Heart left ventricle (tissue), 16 donors: ENCODE measurements at regions of chr12 and their contacts with region 1.

Region 1: GRCh38 chr12:25404955-25405354 is 148.1 kb downstream of the LMNTD1 start:
- DNase-seq: no peak
- ATAC-seq: no peak
- H3K4me3 ChIP-seq: no peak overlapping the region
- H3K27ac ChIP-seq: no peak overlapping the region
- H3K4me1 ChIP-seq: no peaks in the 10 kb centered on the region
- H3K27me3 ChIP-seq: peaks cover 0 to 5% (median 0%) of the 10 kb centered on the region in 9 donors
- CTCF ChIP-seq: no peak
- POLR2A ChIP-seq: no peak

Region 2: GRCh38 chr12:25377469-25378177 is 27.3 kb before region 1 on chr12:
- intact Hi-C with region 1: loop called in 1 of 10 experiments (anchors 2 kb)
- DNase-seq: no peak
- ATAC-seq: no peak
- H3K4me3 ChIP-seq: no peak overlapping the region
- H3K27ac ChIP-seq: peak overlapping the region in 1 of 12 donors; percentile 13
- H3K4me1 ChIP-seq: peaks cover 0 to 20% (median 0%) of the 10 kb centered on the region in 12 donors
- H3K27me3 ChIP-seq: no peaks in the 10 kb centered on the region
- CTCF ChIP-seq: no peak
- POLR2A ChIP-seq: no peak

Region 3: DNA sequence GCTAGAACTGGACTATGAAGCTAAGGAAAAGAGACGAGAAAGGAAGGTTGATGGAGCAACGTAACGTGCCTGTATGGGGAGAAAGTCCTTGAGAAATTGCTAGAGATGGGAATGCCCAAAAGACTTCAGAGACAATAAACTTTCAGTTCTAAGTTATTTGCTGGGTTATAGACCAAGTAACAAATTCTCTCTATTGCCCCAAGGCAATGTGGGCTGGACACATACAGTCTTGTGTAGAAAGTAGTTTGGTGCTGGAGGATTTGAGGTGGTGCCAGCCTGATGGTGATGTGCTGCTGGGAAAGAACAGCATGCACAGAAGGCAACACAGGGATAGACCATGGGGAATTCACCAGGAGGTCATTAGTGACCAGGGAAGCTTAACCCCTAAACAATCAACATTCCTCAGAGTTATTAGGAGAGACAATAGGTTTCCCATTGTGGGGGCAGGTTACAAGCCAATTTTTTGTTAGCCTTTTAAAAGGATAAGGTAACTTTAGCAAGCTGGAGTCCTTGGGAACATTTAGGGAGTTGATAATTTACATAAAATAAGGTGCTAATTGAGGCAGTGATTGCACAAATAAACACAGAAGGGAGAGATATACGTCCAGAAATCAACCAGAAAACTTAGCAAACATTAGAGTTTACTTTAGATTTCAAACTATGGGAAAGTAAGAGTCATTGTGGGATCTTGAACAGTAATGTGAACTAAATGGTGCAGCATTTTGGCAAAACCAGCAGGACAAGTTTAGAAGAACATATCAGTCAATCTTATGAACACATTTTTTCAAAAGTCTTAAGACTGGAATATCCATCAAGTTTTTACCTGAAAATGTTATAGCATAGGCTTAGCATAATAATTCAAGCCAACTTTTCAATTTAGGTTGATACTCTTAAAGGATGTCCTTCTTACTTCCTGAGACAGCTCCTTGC is 86.7 kb after region 1 on chr12:
- intact Hi-C with region 1: no loop called
- DNase-seq: no peak
- ATAC-seq: no peak
- H3K4me3 ChIP-seq: no peak overlapping the region
- H3K27ac ChIP-seq: no peak overlapping the region
- H3K4me1 ChIP-seq: peaks cover 0 to 4% (median 0%) of the 10 kb centered on the region in 12 donors
- H3K27me3 ChIP-seq: no peaks in the 10 kb centered on the region
- CTCF ChIP-seq: no peak
- POLR2A ChIP-seq: no peak